ENCODE measurements at regions of chr2 and their contacts with region 1.

Region 1: GRCh38 chr2:20635675-20636584 is 15.0 kb downstream of the HS1BP3 start:
- DNase-seq: peak; percentile 83
- ATAC-seq: peak; percentile 98
- H3K4me3 ChIP-seq: no peak overlapping the region
- H3K27ac ChIP-seq: no peak overlapping the region
- H3K4me1 ChIP-seq: peaks cover 19% of the 10 kb centered on the region
- H3K27me3 ChIP-seq: no peaks in the 10 kb centered on the region
- CTCF ChIP-seq: peak; percentile 95

Region 2: GRCh38 chr2:20398956-20399567 is 236.9 kb before region 1 on chr2:
- CTCF ChIA-PET with region 1: interaction called, 3 read pairs
- POLR2A ChIA-PET with region 1: no interaction called
- intact Hi-C with region 1: loop called (anchors 1 kb)
- DNase-seq: peak; percentile 55
- ATAC-seq: no peak
- H3K4me3 ChIP-seq: no peak overlapping the region
- H3K27ac ChIP-seq: no peak overlapping the region
- H3K4me1 ChIP-seq: peaks cover 9% of the 10 kb centered on the region
- H3K27me3 ChIP-seq: no peaks in the 10 kb centered on the region
- CTCF ChIP-seq: no peak

Region 3: GRCh38 chr2:20471148-20471547 is 164.8 kb before region 1 on chr2:
- CTCF ChIA-PET with region 1: no interaction called
- POLR2A ChIA-PET with region 1: no interaction called
- intact Hi-C with region 1: no loop called
- DNase-seq: no peak
- ATAC-seq: no peak
- H3K4me3 ChIP-seq: no peak overlapping the region
- H3K27ac ChIP-seq: no peak overlapping the region
- H3K4me1 ChIP-seq: peaks cover 14% of the 10 kb centered on the region
- H3K27me3 ChIP-seq: no peaks in the 10 kb centered on the region
- CTCF ChIP-seq: no peak

Region 4: DNA sequence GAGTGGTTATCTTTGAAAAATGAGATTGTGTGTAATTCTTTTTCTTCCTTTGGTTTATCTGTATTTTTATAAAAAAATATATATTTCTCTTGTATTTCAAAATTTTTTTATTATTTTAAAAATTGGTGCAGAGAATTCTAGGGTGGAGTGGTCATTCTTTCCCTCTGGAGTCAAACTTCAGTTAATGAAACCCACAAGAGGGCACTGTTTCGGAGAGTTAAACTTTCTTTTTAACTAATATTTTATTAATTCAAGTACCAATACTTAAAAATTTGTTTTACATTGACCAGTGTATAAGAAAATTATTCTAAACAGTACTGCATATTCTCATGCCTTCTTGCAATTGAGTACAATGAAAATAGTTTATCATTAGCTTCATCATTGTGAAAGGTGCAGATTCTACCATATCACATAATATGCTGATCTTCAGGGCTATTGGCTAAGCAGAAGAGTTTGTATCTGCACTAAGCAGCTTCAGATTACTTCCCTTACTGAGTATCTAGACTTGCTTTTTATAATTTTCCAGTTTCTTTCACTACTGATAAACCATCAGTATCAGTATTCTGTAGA is 35.1 kb before region 1 on chr2:
- CTCF ChIA-PET with region 1: no interaction called
- POLR2A ChIA-PET with region 1: no interaction called
- intact Hi-C with region 1: loop called (anchors 2 kb)
- DNase-seq: peak; percentile 44
- ATAC-seq: no peak
- H3K4me3 ChIP-seq: no peak overlapping the region
- H3K27ac ChIP-seq: no peak overlapping the region
- H3K4me1 ChIP-seq: peaks cover 13% of the 10 kb centered on the region
- H3K27me3 ChIP-seq: no peaks in the 10 kb centered on the region
- CTCF ChIP-seq: peak; percentile 46

Region 5: DNA sequence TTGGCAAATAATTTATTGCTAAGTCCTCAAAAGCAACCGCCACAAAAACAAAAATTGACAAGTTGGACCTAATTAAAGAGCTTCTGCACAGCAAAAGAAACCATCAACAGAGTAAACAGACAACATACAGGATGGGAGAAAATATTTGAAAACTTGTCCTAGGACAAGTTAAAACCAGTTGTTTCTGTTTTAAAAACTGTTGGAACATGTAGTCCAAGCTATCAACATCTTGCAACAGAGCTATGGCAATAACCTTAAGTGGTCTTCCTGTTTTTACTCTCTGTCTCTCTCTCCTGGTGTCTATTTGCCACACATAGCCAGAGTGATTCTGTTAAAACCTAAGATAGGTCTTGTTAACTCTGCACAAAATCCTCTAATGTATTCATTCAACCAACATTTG is 252.3 kb after region 1 on chr2:
- CTCF ChIA-PET with region 1: no interaction called
- POLR2A ChIA-PET with region 1: no interaction called
- intact Hi-C with region 1: no loop called
- DNase-seq: no peak
- ATAC-seq: no peak
- H3K4me3 ChIP-seq: no peak overlapping the region
- H3K27ac ChIP-seq: no peak overlapping the region
- H3K4me1 ChIP-seq: no peaks in the 10 kb centered on the region
- H3K27me3 ChIP-seq: no peaks in the 10 kb centered on the region
- CTCF ChIP-seq: no peak

Measured in PC-3 (cell line).